Endothelial cell of umbilical vein (primary cell): ENCODE measurements at regions of chr3 and their contacts with region 1.

Region 1: GRCh38 chr3:100068826-100069225 is 45.5 kb downstream of the FILIP1L start:
- DNase-seq: peak; percentile 85
- H3K4me3 ChIP-seq: no peak overlapping the region
- H3K27ac ChIP-seq: peak overlapping the region; percentile 54
- H3K4me1 ChIP-seq: peaks cover 16% of the 10 kb centered on the region
- H3K27me3 ChIP-seq: no peaks in the 10 kb centered on the region
- CTCF ChIP-seq: peak; percentile 71 to 75
- POLR2A ChIP-seq: no peak

Region 2: GRCh38 chr3:99833617-99834205 is 235.1 kb before region 1 on chr3:
- CTCF ChIA-PET with region 1: interaction called, 30 read pairs
- POLR2A ChIA-PET with region 1: no interaction called
- dilution Hi-C with region 1: no loop called
- intact Hi-C with region 1: no loop called
- DNase-seq: peak; percentile 87
- H3K4me3 ChIP-seq: no peak overlapping the region
- H3K27ac ChIP-seq: no peak overlapping the region
- H3K4me1 ChIP-seq: peaks cover 23% of the 10 kb centered on the region
- H3K27me3 ChIP-seq: no peaks in the 10 kb centered on the region
- CTCF ChIP-seq: no peak
- POLR2A ChIP-seq: no peak

Region 3: GRCh38 chr3:100006570-100007271 is 62.1 kb before region 1 on chr3:
- CTCF ChIA-PET with region 1: interaction called, 10 read pairs
- POLR2A ChIA-PET with region 1: no interaction called
- dilution Hi-C with region 1: no loop called
- intact Hi-C with region 1: no loop called
- DNase-seq: peak; percentile 72
- H3K4me3 ChIP-seq: no peak overlapping the region
- H3K27ac ChIP-seq: no peak overlapping the region
- H3K4me1 ChIP-seq: peaks cover 73% of the 10 kb centered on the region
- H3K27me3 ChIP-seq: no peaks in the 10 kb centered on the region
- CTCF ChIP-seq: no peak
- POLR2A ChIP-seq: no peak

Region 4: DNA sequence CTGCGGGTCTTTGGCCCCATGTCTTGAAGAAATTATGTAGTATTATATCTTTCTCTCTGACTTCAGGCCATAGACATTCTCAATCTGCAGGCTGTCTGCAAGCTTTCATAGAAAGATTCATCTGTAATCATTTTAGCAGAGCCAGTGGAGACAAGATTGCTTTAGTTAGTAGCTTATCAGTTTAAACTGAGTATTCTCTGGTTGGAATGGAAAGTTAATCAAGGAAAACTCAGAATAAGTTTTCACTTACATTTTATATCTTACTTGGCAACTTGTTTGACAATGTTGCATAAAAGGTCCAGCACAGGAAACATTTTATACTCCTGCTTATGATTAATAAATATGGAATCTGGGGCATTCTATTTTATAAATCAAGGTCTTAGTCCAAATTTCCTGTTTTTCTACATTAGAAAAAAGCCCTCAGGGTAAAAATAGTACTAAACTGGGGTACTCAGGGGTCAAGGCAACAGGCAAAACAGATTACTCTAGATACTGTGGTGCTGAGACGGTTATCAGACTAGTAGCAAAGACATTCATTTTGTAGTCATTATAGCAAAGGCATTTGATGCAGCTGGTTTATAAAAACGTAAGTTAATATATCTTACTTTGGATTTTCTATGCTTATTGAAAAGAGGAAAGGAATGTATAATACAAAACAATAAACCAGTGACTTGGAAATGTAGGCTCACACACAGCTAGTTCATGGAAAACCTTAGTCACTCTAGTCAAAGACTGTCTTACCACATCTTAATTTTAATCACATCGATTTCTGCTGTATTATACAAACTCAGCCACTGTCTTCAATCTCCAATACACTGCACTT is 90.7 kb after region 1 on chr3:
- CTCF ChIA-PET with region 1: interaction called, 23 read pairs
- POLR2A ChIA-PET with region 1: no interaction called
- dilution Hi-C with region 1: no loop called
- intact Hi-C with region 1: loop called (anchors 1 kb)
- DNase-seq: peak; percentile 94
- H3K4me3 ChIP-seq: peak overlapping the region in 2 of 3 experiments; percentile 14 to 43
- H3K27ac ChIP-seq: peak overlapping the region; percentile 75
- H3K4me1 ChIP-seq: peaks cover 41% of the 10 kb centered on the region
- H3K27me3 ChIP-seq: no peaks in the 10 kb centered on the region
- CTCF ChIP-seq: no peak
- POLR2A ChIP-seq: peak; percentile 22

Region 5: DNA sequence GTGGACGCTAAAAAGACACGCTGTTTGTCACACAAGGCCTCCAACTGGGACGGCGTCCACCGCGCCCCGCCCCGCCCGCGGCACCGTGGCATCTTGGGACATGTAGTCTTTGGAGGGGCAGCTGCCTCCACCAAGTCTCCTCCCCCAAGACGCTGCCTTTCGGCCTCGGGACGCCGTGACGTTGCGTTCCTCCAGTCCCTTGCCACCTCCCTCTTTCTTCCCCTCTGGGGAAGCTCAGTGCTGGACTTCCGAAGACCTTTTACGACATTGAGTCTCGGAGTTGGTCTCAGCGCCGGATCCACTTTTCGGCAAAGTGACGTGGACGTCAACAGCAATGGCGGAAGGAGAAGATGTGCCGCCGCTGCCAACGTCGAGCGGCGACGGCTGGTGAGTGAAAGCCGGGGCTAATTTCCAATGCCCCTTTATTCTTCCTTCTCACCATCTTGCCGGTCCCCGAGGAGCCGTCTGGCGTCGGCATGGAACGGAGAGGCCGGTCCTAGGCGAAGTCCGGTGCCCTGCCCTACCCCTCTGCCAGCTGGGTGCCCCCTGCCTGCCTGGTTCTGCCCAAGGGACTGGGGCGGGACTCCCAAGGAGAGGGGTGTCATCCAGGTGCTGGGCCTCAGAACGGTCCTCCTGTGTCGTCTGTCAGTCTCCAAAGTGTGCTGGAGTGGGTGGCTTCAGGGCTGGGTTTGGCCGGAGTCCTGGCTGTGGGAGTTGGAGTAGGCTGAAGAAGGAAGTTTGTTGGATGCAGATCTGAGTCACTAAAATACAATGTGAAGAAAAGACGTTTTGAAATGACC is 192.1 kb after region 1 on chr3 and contains the start of gene TBC1D23:
- CTCF ChIA-PET with region 1: interaction called, 11 read pairs
- POLR2A ChIA-PET with region 1: no interaction called
- dilution Hi-C with region 1: no loop called
- intact Hi-C with region 1: no loop called
- DNase-seq: peak; percentile 100
- H3K4me3 ChIP-seq: peak within 1 kb of the TSS; percentile 45 to 87 (median 76)
- H3K27ac ChIP-seq: peak within 1 kb of the TSS; percentile 78
- H3K4me1 ChIP-seq: peaks cover 15% of the 10 kb centered on the region
- H3K27me3 ChIP-seq: no peaks in the 10 kb centered on the region
- CTCF ChIP-seq: peak in 1 of 2 donors; percentile 4
- POLR2A ChIP-seq: peak; percentile 76
- total RNA-seq, gene TBC1D23: 30.0 and 34.8 TPM in 2 replicates

Region 6: DNA sequence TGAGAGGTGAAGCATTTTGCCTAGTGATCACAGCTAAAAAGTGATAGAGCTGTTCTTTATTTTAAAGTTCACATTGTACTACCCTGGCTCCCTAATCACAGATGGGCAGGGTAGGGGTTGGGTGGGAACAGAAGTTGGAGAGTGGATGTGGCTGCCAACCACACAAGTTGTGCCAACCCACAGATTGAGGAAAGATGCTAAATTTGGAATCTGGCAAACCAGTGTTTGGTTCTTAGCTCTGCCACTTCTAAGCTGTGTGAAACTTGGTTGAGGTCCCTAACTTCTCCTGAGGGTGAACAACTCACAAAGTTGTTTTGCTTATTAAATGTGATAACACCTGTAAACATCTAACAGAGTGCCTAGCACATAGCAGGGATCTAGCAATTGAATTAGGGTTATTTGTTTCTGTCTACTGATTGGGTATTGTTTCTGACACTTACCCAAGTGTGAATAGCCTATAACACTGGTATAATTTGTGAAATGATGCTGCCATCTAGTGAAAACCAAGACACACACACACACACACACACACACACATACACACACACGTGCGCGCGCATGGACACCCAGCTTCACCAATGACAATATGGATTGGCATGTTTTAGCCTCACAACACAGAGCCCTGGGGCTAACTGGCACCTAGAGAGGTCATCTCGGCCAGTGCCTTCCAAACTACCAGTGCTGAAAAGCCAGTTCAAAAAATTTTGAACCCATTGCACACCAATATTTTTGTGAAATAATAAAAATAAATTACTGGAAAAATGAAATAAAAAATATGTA is 565.9 kb after region 1 on chr3:
- CTCF ChIA-PET with region 1: no interaction called
- POLR2A ChIA-PET with region 1: no interaction called
- dilution Hi-C with region 1: no loop called
- intact Hi-C with region 1: no loop called
- DNase-seq: peak; percentile 40
- H3K4me3 ChIP-seq: no peak overlapping the region
- H3K27ac ChIP-seq: no peak overlapping the region
- H3K4me1 ChIP-seq: peaks cover 7% of the 10 kb centered on the region
- H3K27me3 ChIP-seq: no peaks in the 10 kb centered on the region
- CTCF ChIP-seq: peak in 1 of 2 donors; percentile 6
- POLR2A ChIP-seq: no peak